ENCODE measurements at regions of chr12 and their contacts with region 1.

Region 1: DNA sequence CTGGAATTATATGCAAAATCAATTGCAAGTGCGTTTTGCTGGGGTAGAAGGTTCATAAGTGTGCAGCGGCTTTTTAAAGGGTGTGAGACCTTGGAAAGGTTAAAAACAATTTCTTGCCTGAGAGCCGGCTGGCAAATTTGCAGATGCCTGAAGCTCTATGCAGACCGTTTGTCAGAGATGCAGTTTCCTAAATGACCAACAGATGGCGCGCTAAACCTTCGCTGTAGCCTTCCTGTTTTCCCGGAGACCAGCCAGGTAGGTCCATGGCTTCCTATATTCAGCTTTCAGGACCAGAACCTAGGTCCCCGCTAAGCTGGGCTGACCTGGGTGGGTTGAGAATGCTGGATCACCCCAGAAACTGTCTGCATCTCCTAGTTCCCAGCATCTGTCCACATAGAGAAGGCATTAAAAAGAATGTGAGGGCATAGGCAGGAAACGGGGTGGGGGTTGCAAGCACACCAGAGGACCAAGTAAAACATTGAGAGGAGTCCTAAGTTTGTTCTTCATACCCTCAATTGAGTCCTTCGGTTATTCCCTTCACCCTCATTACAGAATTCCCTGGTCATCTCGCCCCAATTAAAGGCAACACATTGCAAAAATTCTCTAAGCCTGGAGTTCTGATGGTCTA is 5.7 kb upstream of the NOS1 start:
- DNase-seq: peak; percentile 57 to 92 (median 83)
- H3K4me3 ChIP-seq: no peak overlapping the region
- H3K27ac ChIP-seq: no peak overlapping the region
- H3K4me1 ChIP-seq: no peaks in the 10 kb centered on the region
- H3K27me3 ChIP-seq: peaks cover 16% of the 10 kb centered on the region
- CTCF ChIP-seq: peak; percentile 80 to 89 (median 88)
- POLR2A ChIP-seq: no peak

Region 2: DNA sequence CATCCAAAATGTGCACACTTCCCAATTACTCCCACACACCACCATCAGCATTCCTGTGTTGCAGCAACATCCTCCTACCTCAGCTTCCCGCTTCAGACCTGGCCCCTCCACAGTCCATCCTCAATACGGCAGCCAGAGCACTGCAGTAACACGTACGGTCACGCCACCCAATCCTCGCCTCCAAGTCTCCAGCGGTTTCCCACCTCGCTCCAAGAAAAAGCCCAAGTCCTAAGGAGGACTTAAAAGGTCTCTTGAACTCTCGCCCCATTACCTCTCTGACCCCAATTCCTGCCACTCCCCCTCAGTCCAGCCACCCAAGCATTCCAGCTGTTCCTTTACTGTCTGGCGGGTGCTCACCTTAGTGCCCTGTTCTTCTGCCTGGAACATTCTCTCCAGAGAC is 188.8 kb before region 1 on chr12:
- intact Hi-C with region 1: no loop called
- DNase-seq: peak in 1 of 7 donors; percentile 44
- H3K4me3 ChIP-seq: no peak overlapping the region
- H3K27ac ChIP-seq: no peak overlapping the region
- H3K4me1 ChIP-seq: peaks cover 0 to 8% of the 10 kb centered on the region in 2 donors
- H3K27me3 ChIP-seq: no peaks in the 10 kb centered on the region
- CTCF ChIP-seq: no peak
- POLR2A ChIP-seq: no peak

Region 3: GRCh38 chr12:117587631-117588287 is 220.6 kb after region 1 on chr12:
- intact Hi-C with region 1: loop called (anchors 2 to 5 kb)
- DNase-seq: peak; percentile 35 to 73 (median 60)
- H3K4me3 ChIP-seq: no peak overlapping the region
- H3K27ac ChIP-seq: no peak overlapping the region
- H3K4me1 ChIP-seq: no peaks in the 10 kb centered on the region
- H3K27me3 ChIP-seq: peaks cover 8% of the 10 kb centered on the region
- CTCF ChIP-seq: peak; percentile 73 to 87 (median 80)
- POLR2A ChIP-seq: no peak